Esophagus muscularis mucosa (tissue), 4 donors: ENCODE measurements at regions of chr9 and their contacts with region 1.

Region 1: GRCh38 chr9:69056191-69056815 is 20.8 kb downstream of the FXN start:
- DNase-seq: no peak
- H3K4me3 ChIP-seq: no peak overlapping the region
- H3K27ac ChIP-seq: no peak overlapping the region
- H3K4me1 ChIP-seq: peaks cover 0 to 21% (median 16%) of the 10 kb centered on the region in 4 donors
- H3K27me3 ChIP-seq: no peaks in the 10 kb centered on the region
- CTCF ChIP-seq: no peak
- EP300 ChIP-seq: no peak
- POLR2A ChIP-seq: no peak

Region 2: DNA sequence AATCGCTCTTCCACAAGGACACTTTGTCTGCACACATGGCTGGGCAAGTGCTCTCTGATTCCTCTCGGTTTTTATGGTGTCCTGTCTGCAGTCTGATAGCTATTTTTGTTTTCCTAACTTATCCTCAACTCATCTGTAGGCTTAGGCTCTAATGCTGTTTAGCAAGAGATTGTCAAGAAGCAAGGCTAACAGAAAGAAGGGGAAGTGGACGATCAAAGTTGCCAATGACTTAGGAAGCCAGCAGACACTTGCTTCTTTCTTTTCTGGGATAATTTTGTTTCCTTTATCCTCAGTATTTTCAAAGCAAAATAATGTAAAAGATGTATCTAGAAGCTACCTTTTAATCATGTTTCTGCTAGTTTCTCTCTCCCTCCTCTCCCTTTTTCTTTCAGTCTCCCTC is 173.1 kb before region 1 on chr9:
- intact Hi-C with region 1: no loop called
- DNase-seq: no peak
- H3K4me3 ChIP-seq: no peak overlapping the region
- H3K27ac ChIP-seq: no peak overlapping the region
- H3K4me1 ChIP-seq: no peaks in the 10 kb centered on the region
- H3K27me3 ChIP-seq: no peaks in the 10 kb centered on the region
- CTCF ChIP-seq: no peak
- EP300 ChIP-seq: no peak
- POLR2A ChIP-seq: no peak

Region 3: DNA sequence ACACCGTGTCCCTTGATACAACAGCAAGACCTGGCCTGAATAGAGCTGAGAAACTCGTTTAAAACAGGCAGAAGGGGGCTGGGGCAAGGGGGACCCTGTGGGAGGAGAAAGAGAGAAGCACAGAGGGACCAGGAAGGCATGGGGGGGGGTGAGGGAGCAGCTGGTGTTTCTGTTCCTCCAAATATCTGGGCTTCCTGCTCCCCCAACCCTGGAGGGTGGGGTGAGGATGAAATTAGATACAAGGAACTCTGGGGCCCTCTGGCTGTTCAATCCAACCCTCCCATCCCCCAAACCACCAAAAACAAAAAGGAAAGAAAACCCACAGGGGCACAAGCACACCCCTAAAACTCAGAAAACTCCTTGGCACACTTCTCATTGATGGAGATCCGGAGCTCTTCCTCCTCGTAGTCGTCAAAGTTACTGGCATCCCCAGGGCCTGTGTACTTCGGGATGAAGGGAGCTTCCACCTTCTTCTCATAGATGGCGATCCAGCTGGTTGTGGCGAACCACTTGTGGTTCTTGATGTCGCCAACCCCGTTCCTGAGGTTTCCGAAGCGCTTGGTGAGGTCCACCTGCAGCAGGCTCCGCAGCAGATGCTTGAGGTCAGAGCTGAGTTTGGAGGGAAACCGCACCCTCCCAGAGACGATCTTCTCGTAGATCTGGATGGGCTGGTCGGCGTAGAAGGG is 43.5 kb before region 1 on chr9:
- intact Hi-C with region 1: no loop called
- DNase-seq: no peak
- H3K4me3 ChIP-seq: no peak overlapping the region
- H3K27ac ChIP-seq: no peak overlapping the region
- H3K4me1 ChIP-seq: peaks cover 5 to 15% (median 11%) of the 10 kb centered on the region in 4 donors
- H3K27me3 ChIP-seq: no peaks in the 10 kb centered on the region
- CTCF ChIP-seq: no peak
- EP300 ChIP-seq: no peak
- POLR2A ChIP-seq: no peak

Region 4: DNA sequence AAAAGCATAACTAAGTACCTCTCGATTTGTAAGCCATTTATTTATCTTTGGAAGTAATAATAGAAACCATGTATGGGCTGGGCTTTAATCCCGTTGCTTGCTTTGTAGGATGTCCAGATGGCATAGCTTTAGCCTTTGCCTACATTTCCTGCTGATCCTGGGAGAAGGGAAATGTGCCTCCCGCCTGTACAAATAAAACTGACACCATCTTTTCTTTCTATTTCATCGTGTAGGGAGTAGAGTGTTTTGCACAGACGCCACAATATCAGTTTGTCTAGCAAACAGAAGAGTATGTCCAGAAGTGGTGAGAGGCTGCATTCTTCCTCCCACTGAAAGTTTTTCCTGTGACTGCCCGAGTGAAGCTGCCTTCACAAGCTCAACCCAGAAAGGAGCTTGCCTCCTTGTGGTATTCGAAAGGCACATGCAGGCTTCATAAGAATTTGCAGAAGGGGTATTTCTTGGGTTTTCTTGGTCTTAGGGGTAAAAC is 93.1 kb after region 1 on chr9:
- intact Hi-C with region 1: loop called (anchors 1 kb)
- DNase-seq: peak; percentile 80
- H3K4me3 ChIP-seq: peak overlapping the region in 3 of 4 donors; percentile 12 to 36 (median 17)
- H3K27ac ChIP-seq: peak overlapping the region; percentile 29 to 70 (median 56)
- H3K4me1 ChIP-seq: peaks cover 11 to 40% (median 23%) of the 10 kb centered on the region in 4 donors
- H3K27me3 ChIP-seq: no peaks in the 10 kb centered on the region
- CTCF ChIP-seq: peak; percentile 27 to 61 (median 41)
- EP300 ChIP-seq: no peak
- POLR2A ChIP-seq: no peak

Region 5: GRCh38 chr9:69190086-69190862 is 134.0 kb after region 1 on chr9:
- intact Hi-C with region 1: loop called (anchors 1 kb)
- DNase-seq: no peak
- H3K4me3 ChIP-seq: no peak overlapping the region
- H3K27ac ChIP-seq: peak overlapping the region in 2 of 4 donors; percentile 4 to 42
- H3K4me1 ChIP-seq: peaks cover 69 to 88% (median 83%) of the 10 kb centered on the region in 4 donors
- H3K27me3 ChIP-seq: no peaks in the 10 kb centered on the region
- CTCF ChIP-seq: no peak
- EP300 ChIP-seq: no peak
- POLR2A ChIP-seq: no peak